Activated CD8-positive, alpha-beta memory T cell treated with anti-CD3 and anti-CD28 coated beads, Interleukin-2, amount 10 ng/mL, durations not matched to agents 7 days and 5 days (primary cell): ENCODE measurements at regions of chr3 and their contacts with region 1.

Region 1: DNA sequence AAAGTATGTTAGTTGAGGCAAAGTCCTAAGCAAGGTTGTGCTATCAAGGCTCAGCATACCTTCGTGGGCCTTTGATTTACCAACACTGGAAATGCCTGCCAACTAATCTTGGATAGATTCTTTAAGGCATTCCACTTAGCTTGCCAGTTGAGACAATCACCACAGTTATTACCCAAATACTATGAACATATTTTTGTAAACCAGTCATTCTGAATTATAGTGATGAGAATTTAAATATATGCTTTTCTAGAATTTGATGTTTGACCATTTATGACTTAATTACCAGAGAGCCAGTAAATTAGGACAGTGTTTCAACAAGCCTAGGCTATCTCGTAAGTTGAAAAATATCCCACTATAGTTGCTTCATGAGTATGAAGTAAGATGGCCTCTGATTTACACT is 15.5 kb downstream of the TRIM59 start:
- DNase-seq: no peak
- ATAC-seq: no peak
- H3K4me3 Mint-ChIP-seq: no peak overlapping the region
- H3K27ac Mint-ChIP-seq: no peak overlapping the region
- H3K4me1 Mint-ChIP-seq: peaks cover 37% of the 10 kb centered on the region
- H3K27me3 Mint-ChIP-seq: no peaks in the 10 kb centered on the region

Region 2: GRCh38 chr3:160413613-160414248 is 20.3 kb before region 1 on chr3:
- CTCF ChIA-PET with region 1: interaction called, 34 read pairs
- DNase-seq: peak; percentile 76
- ATAC-seq: peak; percentile 71
- H3K4me3 Mint-ChIP-seq: no peak overlapping the region
- H3K27ac Mint-ChIP-seq: no peak overlapping the region
- H3K4me1 Mint-ChIP-seq: peaks cover 46% of the 10 kb centered on the region
- H3K27me3 Mint-ChIP-seq: no peaks in the 10 kb centered on the region